Heart right ventricle (tissue), 16 donors: ENCODE measurements at regions of chr2 and their contacts with region 1.

Region 1: GRCh38 chr2:179218848-179219594 is 45.6 kb downstream of the SESTD1 start:
- DNase-seq: peak; percentile 33 to 69
- ATAC-seq: peak; percentile 65 to 95 (median 88)
- H3K4me3 ChIP-seq: no peak overlapping the region
- H3K27ac ChIP-seq: no peak overlapping the region
- H3K4me1 ChIP-seq: peaks cover 0 to 36% (median 13%) of the 10 kb centered on the region in 9 donors
- H3K27me3 ChIP-seq: no peaks in the 10 kb centered on the region
- CTCF ChIP-seq: peak; percentile 76 to 97 (median 89)

Region 2: DNA sequence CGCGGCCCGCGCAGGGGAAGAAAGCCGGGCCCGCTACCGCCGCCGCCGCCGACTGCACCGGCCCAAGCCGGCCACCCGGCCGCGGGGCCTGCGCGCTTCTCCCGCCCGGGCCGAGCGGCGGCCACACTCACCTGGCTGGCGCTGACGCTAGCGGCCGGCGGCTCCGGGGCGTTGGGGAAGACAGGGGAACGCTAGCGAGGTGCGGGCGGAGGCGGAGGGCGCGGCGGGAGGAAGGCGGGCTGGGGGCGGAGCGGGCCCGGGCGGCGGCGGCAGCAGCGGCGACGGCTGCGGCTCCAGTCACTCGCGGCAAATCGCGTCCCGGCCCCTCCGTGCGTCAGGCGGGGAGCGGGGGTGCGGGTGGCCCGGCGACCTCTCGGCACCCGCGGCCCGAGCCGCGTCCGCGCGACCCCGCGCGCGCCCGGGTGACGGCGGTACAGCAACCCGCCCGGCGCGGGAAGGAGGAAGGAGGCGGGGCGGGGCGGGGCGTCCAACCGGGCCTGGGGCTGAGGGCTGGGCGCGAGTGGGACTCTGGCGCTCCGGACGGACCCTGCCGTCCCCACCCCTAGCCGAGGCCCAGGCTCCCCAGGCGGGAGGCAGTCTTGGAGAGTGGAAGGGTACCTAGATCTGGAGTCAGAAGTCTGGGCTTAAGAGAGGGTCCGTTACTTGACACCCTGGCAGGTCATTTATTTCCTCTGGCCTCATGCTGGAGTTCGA is 45.5 kb after region 1 on chr2 and contains the start of gene SESTD1:
- intact Hi-C with region 1: loop called in 1 of 10 experiments (anchors 10 kb)
- DNase-seq: peak; percentile 71 to 79
- ATAC-seq: peak; percentile 82 to 89 (median 84)
- H3K4me3 ChIP-seq: peak within 1 kb of the TSS; percentile 44 to 85 (median 76)
- H3K27ac ChIP-seq: peak within 1 kb of the TSS; percentile 67 to 94 (median 82)
- H3K4me1 ChIP-seq: peaks cover 0 to 50% (median 19%) of the 10 kb centered on the region in 9 donors
- H3K27me3 ChIP-seq: no peaks in the 10 kb centered on the region
- CTCF ChIP-seq: no peak
- total RNA-seq, gene SESTD1: 28.6 to 41.7 (median 35.6) TPM

Region 3: GRCh38 chr2:179340668-179341067 is 121.6 kb after region 1 on chr2:
- intact Hi-C with region 1: loop called in 7 of 10 experiments (anchors 5 to 10 kb)
- DNase-seq: no peak
- ATAC-seq: no peak
- H3K4me3 ChIP-seq: no peak overlapping the region
- H3K27ac ChIP-seq: no peak overlapping the region
- H3K4me1 ChIP-seq: peaks cover 0 to 19% (median 5%) of the 10 kb centered on the region in 9 donors
- H3K27me3 ChIP-seq: no peaks in the 10 kb centered on the region
- CTCF ChIP-seq: peak in 7 of 9 donors; percentile 20 to 51 (median 37)

Region 4: DNA sequence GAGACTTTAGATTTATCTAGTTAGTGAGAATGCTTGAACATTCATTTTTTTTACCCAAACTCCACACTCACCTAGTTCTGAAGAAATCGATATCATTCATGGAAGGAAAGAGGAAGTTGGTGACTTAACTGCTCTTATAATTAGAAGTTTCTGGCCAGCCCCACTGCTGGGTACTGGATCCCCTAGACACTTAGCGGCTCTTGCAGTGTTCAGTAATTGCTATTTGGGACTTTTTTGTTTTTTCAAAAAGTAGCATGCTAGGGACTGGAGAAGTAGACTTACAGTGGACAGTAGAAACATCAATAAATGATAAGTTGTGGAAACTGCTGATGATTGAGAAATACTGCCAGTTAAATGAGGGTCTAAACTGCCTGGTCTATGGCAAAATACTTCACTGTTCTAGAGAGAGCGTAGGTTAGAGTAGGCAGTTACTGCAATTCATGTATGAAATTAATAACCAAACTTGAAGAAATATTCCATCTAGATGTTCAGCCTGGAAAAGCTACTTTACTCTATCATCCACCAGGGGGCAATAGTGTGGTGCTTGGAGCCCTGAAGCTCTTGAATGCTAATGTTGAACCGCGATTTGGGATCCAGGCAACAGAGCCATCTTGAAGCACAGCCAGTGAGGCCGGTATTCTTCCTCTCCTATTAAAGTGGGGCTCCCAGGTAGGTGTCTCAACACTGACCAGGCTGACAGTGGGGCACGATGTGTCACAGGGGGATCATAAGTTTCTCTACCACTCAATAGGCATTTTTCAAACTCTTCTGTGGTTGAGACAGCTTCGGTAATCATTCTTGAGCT is 191.7 kb after region 1 on chr2:
- intact Hi-C with region 1: loop called in 4 of 10 experiments (anchors 10 kb)
- DNase-seq: peak in 1 of 2 donors; percentile 26
- ATAC-seq: peak in 3 of 8 donors; percentile 47 to 73 (median 61)
- H3K4me3 ChIP-seq: no peak overlapping the region
- H3K27ac ChIP-seq: no peak overlapping the region
- H3K4me1 ChIP-seq: no peaks in the 10 kb centered on the region
- H3K27me3 ChIP-seq: peaks cover 0 to 24% (median 7%) of the 10 kb centered on the region in 7 donors
- CTCF ChIP-seq: peak; percentile 42 to 81 (median 71)

Region 5: GRCh38 chr2:179440642-179441251 is 221.7 kb after region 1 on chr2:
- intact Hi-C with region 1: loop called in 7 of 10 experiments (anchors 2 to 10 kb)
- DNase-seq: no peak
- ATAC-seq: peak in 1 of 8 donors; percentile 15
- H3K4me3 ChIP-seq: no peak overlapping the region
- H3K27ac ChIP-seq: no peak overlapping the region
- H3K4me1 ChIP-seq: peaks cover 0 to 14% (median 0%) of the 10 kb centered on the region in 9 donors
- H3K27me3 ChIP-seq: peaks cover 0 to 8% (median 0%) of the 10 kb centered on the region in 7 donors
- CTCF ChIP-seq: peak in 8 of 9 donors; percentile 36 to 74 (median 65)

Region 6: GRCh38 chr2:180306346-180306745 is 1087.3 kb after region 1 on chr2:
- intact Hi-C with region 1: no loop called
- DNase-seq: no peak
- ATAC-seq: no peak
- H3K4me3 ChIP-seq: no peak overlapping the region
- H3K27ac ChIP-seq: no peak overlapping the region
- H3K4me1 ChIP-seq: no peaks in the 10 kb centered on the region
- H3K27me3 ChIP-seq: no peaks in the 10 kb centered on the region
- CTCF ChIP-seq: no peak